ENCODE measurements at regions of chr2 and their contacts with region 1.

Region 1: DNA sequence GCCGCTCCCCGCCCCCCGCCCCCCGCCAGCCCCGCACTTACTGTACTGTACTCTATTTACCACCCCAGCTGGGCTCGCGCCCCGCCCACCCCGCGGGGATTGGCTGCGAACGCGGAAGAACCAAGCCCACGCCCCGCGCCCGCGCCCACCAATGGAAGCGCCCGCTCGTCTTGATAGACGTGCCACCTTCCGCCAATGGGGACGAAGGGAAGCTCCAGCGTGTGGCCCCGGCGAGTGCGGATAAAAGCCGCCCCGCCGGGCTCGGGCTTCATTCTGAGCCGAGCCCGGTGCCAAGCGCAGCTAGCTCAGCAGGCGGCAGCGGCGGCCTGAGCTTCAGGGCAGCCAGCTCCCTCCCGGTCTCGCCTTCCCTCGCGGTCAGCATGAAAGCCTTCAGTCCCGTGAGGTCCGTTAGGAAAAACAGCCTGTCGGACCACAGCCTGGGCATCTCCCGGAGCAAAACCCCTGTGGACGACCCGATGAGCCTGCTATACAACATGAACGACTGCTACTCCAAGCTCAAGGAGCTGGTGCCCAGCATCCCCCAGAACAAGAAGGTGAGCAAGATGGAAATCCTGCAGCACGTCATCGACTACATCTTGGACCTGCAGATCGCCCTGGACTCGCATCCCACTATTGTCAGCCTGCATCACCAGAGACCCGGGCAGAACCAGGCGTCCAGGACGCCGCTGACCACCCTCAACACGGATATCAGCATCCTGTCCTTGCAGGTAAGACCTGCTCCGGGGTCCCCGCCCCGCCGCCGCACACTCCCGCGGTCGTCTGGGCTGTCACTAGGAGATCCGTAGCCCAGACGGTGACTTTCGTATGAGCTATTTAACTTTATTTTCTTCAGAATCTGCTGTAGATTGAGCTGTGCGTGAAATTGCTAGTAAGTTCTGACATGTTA is at the start of gene ID2:
- DNase-seq: peak; percentile 88
- ATAC-seq: peak; percentile 64
- H3K4me3 ChIP-seq: peak within 1 kb of the TSS; percentile 80
- H3K27ac ChIP-seq: peak within 1 kb of the TSS; percentile 71
- H3K4me1 ChIP-seq: peaks cover 23% of the 10 kb centered on the region
- H3K27me3 ChIP-seq: peaks cover 0 to 8% of the 10 kb centered on the region in 2 experiments; a peak in 1 of 4 replicates
- CTCF ChIP-seq: no peak
- EP300 ChIP-seq: no peak
- POLR2A ChIP-seq: peak; percentile 99
- RAD21 ChIP-seq: no peak
- polyA plus RNA-seq, gene ID2: 77.3 to 82.5 TPM

Region 2: DNA sequence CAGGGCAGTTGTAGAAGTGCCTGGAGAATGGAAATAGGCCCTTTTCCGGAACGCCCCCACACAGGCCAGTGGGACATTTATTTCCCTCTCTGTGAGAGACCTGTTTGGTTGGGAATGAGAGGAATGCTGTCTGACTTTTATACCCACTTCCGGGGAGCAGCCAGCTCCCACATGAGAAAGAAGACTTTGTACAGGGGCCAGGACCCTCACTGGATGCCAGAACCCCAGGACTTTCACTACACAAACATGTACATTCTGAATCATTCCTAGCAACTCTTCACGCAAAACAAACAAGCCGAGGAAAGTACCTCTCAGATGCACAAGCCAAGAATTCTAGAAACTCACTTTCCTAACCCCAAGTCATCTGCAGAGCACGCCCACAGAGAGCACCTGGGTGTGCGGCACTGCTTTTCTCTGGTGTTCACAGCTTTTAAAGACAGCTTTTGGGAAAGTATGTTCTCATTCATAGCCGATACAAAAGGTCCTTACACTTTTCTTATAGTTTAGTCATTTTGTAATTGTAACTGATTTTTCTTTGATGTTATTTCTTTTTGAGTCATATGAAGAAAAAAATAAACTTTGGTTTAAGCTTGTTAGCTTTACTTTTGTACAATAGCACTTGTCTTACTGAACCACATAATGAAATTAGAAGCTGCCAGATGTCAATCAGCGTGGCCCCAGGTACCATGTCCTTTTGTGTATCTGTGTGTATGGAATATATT is 856.3 kb before region 1 on chr2:
- CTCF ChIA-PET with region 1: no interaction called
- POLR2A ChIA-PET with region 1: no interaction called
- RAD21 ChIA-PET with region 1: no interaction called
- SMC1A ChIA-PET with region 1: no interaction called
- in situ Hi-C with region 1: no loop called
- intact Hi-C with region 1: loop called (anchors 10 kb)
- DNase-seq: peak; percentile 78
- ATAC-seq: peak; percentile 97
- H3K4me3 ChIP-seq: no peak overlapping the region
- H3K27ac ChIP-seq: peak overlapping the region; percentile 75
- H3K4me1 ChIP-seq: peaks cover 10% of the 10 kb centered on the region
- H3K27me3 ChIP-seq: no peaks in the 10 kb centered on the region
- CTCF ChIP-seq: no peak
- EP300 ChIP-seq: peak; percentile 94 to 98
- POLR2A ChIP-seq: no peak
- RAD21 ChIP-seq: peak; percentile 19; the same call in 1 of the 2 replicates

Region 3: DNA sequence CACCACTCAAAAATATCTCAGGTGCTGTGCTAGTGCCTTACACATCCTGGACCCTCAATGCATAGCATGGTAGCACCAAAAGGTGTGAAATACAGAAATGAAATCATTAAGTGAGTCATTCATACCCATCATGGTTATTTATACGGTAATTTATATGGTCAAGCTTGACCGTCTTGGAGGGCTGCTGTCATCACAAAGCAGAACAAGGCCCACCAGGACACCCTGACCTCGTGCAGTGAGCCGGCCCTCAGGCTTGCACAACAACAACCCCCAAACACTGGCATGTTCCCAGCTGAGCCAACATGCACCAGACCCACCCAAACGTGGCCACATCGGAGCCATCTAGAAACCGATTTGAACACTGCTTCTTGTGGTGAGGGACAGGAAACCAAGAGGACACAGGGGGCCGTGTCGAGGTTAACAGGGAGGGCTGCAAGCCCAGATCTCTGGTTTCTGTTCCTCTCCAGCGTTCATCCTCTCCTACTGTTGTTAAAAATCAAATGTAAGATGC is 378.7 kb before region 1 on chr2:
- CTCF ChIA-PET with region 1: no interaction called
- POLR2A ChIA-PET with region 1: interaction called, 3 read pairs
- RAD21 ChIA-PET with region 1: interaction called, 4 read pairs
- SMC1A ChIA-PET with region 1: interaction called, 5 read pairs
- in situ Hi-C with region 1: loop called (anchors 5 kb)
- intact Hi-C with region 1: loop called (anchors 2 kb)
- DNase-seq: peak; percentile 95
- ATAC-seq: peak; percentile 77
- H3K4me3 ChIP-seq: no peak overlapping the region
- H3K27ac ChIP-seq: peak overlapping the region; percentile 81
- H3K4me1 ChIP-seq: peaks cover 74% of the 10 kb centered on the region
- H3K27me3 ChIP-seq: no peaks in the 10 kb centered on the region
- CTCF ChIP-seq: peak in 1 of 3 experiments; percentile 4; a peak in 1 of 6 replicates
- EP300 ChIP-seq: peak; percentile 92 to 94
- POLR2A ChIP-seq: peak; percentile 27; the same call in 1 of the 2 replicates
- RAD21 ChIP-seq: peak; percentile 35; the same call in 1 of the 2 replicates

Region 4: GRCh38 chr2:8488001-8488738 is 193.9 kb before region 1 on chr2:
- CTCF ChIA-PET with region 1: interaction called, 15 read pairs
- POLR2A ChIA-PET with region 1: interaction called, 46 read pairs
- RAD21 ChIA-PET with region 1: interaction called, 66 read pairs
- SMC1A ChIA-PET with region 1: interaction called, 13 read pairs
- in situ Hi-C with region 1: no loop called
- intact Hi-C with region 1: loop called (anchors 1 kb)
- DNase-seq: peak; percentile 95
- ATAC-seq: peak; percentile 63
- H3K4me3 ChIP-seq: peak overlapping the region; percentile 75
- H3K27ac ChIP-seq: peak overlapping the region; percentile 80
- H3K4me1 ChIP-seq: peaks cover 19% of the 10 kb centered on the region
- H3K27me3 ChIP-seq: no peaks in the 10 kb centered on the region
- CTCF ChIP-seq: no peak
- EP300 ChIP-seq: peak; percentile 78 to 80; a peak in 3 of 4 replicates
- POLR2A ChIP-seq: no peak
- RAD21 ChIP-seq: peak; percentile 1; the same call in 1 of the 2 replicates

Region 5: DNA sequence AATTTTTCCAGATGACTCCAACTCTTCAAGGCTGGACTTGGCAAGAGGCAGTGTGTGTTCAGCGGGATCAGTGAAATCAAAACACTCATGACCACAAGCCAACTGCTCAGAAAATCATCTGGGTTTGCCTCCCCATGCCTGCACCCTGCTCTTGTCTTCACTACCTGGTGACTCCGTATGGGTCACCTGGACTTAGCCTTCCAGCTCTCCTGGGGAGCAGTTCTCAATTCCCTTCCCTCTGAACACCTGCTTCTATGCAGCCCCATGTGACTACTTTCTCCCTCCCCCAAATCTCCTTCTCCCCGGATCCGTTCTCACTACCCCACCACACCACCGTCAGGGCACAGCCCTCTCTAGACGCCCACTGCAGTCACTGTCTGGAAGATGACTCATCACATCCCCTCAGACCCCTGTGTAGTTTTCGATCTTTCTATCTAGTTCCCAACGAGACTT is 130.4 kb before region 1 on chr2:
- CTCF ChIA-PET with region 1: interaction called, 7 read pairs
- POLR2A ChIA-PET with region 1: interaction called, 9 read pairs
- RAD21 ChIA-PET with region 1: interaction called, 31 read pairs
- SMC1A ChIA-PET with region 1: interaction called, 11 read pairs
- in situ Hi-C with region 1: no loop called
- intact Hi-C with region 1: no loop called
- DNase-seq: no peak
- ATAC-seq: peak; percentile 88
- H3K4me3 ChIP-seq: no peak overlapping the region
- H3K27ac ChIP-seq: no peak overlapping the region; the same call in 1 of the 2 replicates
- H3K4me1 ChIP-seq: peaks cover 15% of the 10 kb centered on the region
- H3K27me3 ChIP-seq: no peaks in the 10 kb centered on the region
- CTCF ChIP-seq: no peak
- EP300 ChIP-seq: peak in 1 of 2 experiments; percentile 17; a peak in 1 of 4 replicates
- POLR2A ChIP-seq: no peak
- RAD21 ChIP-seq: no peak

Region 6: DNA sequence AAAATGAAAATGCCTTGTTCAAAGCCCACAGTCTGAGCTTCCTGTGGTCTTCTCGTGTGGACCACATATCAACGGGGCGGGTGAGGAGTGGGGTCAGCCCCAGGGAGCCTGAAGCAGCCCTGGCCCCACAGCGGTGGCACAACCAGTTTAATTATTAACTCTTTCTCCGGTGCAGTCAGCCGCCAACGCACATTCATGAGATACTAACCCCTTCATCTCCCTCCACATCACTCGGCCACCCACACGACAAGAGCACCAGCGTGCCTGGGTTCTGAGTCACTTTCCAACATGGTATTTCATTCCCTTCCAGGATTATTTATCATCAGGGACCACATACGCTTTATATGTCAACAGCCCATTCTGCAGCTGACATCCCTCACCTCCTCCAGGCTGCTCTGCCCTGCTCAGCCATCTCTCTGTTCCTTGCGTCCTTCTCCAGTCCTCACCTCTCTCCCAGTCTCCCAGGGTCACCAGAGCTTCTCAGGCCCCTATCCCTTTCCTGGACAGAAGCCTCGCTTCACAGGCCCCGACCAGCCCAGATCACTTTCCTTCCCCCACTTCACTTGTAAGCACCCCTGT is 48.2 kb before region 1 on chr2:
- CTCF ChIA-PET with region 1: interaction called, 5 read pairs
- POLR2A ChIA-PET with region 1: interaction called, 9 read pairs
- RAD21 ChIA-PET with region 1: interaction called, 13 read pairs
- SMC1A ChIA-PET with region 1: interaction called, 16 read pairs
- in situ Hi-C with region 1: no loop called
- intact Hi-C with region 1: no loop called
- DNase-seq: no peak
- ATAC-seq: peak; percentile 75
- H3K4me3 ChIP-seq: no peak overlapping the region
- H3K27ac ChIP-seq: no peak overlapping the region
- H3K4me1 ChIP-seq: peaks cover 2% of the 10 kb centered on the region; the same call in 1 of the 2 replicates
- H3K27me3 ChIP-seq: no peaks in the 10 kb centered on the region; a peak in 1 of 4 replicates
- CTCF ChIP-seq: no peak
- EP300 ChIP-seq: no peak
- POLR2A ChIP-seq: no peak
- RAD21 ChIP-seq: no peak

Region 7: DNA sequence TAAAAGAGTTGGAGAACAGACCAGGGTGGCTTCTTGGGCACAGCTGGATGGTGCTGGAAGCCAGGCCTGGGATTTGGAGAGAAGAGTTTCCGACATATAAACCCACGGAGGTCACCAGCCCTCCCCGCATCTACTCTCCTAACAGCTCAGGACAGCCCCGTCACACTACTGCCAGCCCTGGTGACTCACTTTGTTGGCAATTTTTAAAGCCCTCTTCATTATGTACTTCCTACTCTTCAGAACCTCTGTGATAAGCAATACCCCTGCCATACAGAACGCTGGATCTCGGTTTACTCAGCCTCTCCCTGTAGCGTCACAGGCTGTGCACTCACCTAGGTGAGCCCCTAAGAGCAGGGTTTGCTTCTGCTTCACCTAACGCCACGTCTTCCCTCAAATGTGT is 47.9 kb after region 1 on chr2:
- CTCF ChIA-PET with region 1: no interaction called
- POLR2A ChIA-PET with region 1: no interaction called
- RAD21 ChIA-PET with region 1: no interaction called
- SMC1A ChIA-PET with region 1: no interaction called
- in situ Hi-C with region 1: no loop called
- intact Hi-C with region 1: no loop called
- DNase-seq: no peak
- ATAC-seq: no peak
- H3K4me3 ChIP-seq: no peak overlapping the region
- H3K27ac ChIP-seq: no peak overlapping the region
- H3K4me1 ChIP-seq: no peaks in the 10 kb centered on the region
- H3K27me3 ChIP-seq: no peaks in the 10 kb centered on the region
- CTCF ChIP-seq: no peak
- EP300 ChIP-seq: no peak
- POLR2A ChIP-seq: no peak
- RAD21 ChIP-seq: no peak

Region 8: DNA sequence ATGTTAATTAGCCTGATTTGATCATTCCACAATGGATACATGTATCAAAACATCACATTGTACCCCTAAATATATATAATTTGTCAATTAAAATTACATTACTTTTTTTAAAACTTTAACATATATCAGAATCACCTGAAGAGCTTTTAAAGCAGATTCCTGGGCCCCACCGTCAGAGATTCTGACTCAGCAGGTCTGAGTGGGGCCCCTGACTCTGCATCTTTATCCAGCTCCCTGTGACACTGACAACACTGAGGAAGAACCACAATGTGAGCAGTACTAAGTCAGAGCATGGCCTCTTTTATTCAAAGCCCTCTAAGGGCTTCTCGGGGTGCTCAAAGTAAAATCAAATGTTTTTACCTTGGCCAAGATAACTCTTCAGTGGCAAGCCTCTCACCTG is 145.7 kb after region 1 on chr2:
- CTCF ChIA-PET with region 1: no interaction called
- POLR2A ChIA-PET with region 1: no interaction called
- RAD21 ChIA-PET with region 1: no interaction called
- SMC1A ChIA-PET with region 1: no interaction called
- in situ Hi-C with region 1: no loop called
- intact Hi-C with region 1: no loop called
- DNase-seq: no peak
- ATAC-seq: no peak
- H3K4me3 ChIP-seq: no peak overlapping the region
- H3K27ac ChIP-seq: no peak overlapping the region
- H3K4me1 ChIP-seq: no peaks in the 10 kb centered on the region
- H3K27me3 ChIP-seq: no peaks in the 10 kb centered on the region
- CTCF ChIP-seq: no peak
- EP300 ChIP-seq: no peak
- POLR2A ChIP-seq: no peak
- RAD21 ChIP-seq: no peak

Measured in GM12878 (cell line).